Natural killer cell (primary cell): ENCODE measurements at regions of chr3 and their contacts with region 1.

Region 1: DNA sequence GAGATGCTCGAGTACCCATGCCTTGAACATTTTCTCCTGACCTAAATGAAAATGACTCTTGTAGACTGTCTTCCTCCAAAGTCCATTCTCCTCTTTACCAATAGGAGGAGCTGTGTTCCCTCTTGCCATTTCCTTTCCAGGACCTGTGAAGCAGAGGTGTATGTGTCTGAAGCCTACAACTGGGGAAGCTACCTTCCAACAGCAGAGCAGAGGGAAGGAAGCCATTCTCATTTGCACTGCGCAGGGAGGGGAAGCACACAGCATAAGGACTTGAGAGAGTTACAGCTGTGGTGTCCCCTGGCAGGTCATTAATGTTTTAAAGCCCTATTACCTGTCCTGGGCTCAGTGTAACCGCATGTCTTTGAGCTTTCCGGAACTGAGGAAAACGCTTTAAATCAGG is 38.7 kb downstream of the HSPBAP1 start:
- DNase-seq: peak in 1 of 2 donors; percentile 68
- ATAC-seq: peak; percentile 68 to 77 (median 73)
- H3K4me3 ChIP-seq: no peak overlapping the region
- H3K4me3 Mint-ChIP-seq: no peak overlapping the region
- H3K27ac ChIP-seq: no peak overlapping the region
- H3K27ac Mint-ChIP-seq: no peak overlapping the region
- H3K4me1 ChIP-seq: no peaks in the 10 kb centered on the region
- H3K4me1 Mint-ChIP-seq: no peaks in the 10 kb centered on the region
- H3K27me3 ChIP-seq: no peaks in the 10 kb centered on the region
- H3K27me3 Mint-ChIP-seq: no peaks in the 10 kb centered on the region
- CTCF ChIP-seq: peak; percentile 61

Region 2: GRCh38 chr3:122679085-122679881 is 75.6 kb before region 1 on chr3:
- intact Hi-C with region 1: no loop called
- DNase-seq: peak; percentile 75 to 94
- ATAC-seq: peak; percentile 65 to 75 (median 65)
- H3K4me3 ChIP-seq: peak overlapping the region; percentile 98
- H3K4me3 Mint-ChIP-seq: peak overlapping the region; percentile 90
- H3K27ac ChIP-seq: peak overlapping the region; percentile 96
- H3K27ac Mint-ChIP-seq: peak overlapping the region; percentile 84 to 99
- H3K4me1 ChIP-seq: peaks cover 40% of the 10 kb centered on the region
- H3K4me1 Mint-ChIP-seq: peaks cover 50 to 52% of the 10 kb centered on the region in 2 donors
- H3K27me3 ChIP-seq: no peaks in the 10 kb centered on the region
- H3K27me3 Mint-ChIP-seq: no peaks in the 10 kb centered on the region
- CTCF ChIP-seq: peak; percentile 82

Region 3: DNA sequence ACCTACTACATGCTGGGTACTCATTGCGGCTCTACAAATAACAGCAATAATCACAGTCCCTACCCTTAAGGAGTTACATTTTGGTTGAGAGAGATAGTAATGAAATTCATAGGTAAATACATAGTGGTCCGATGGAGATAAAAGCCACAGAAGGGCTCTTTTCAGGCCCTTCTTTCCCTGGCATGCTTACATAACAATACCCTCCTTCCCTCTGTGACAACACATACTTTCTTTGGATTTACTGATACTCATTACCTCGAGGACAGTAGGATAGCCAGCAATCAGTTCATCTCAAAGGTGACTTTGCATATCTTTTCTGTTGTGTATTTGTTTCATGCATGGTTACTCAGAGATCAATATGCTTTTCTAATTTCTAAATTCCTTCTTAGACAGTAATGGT is 15.8 kb before region 1 on chr3:
- intact Hi-C with region 1: no loop called
- DNase-seq: no peak
- ATAC-seq: no peak
- H3K4me3 ChIP-seq: no peak overlapping the region
- H3K4me3 Mint-ChIP-seq: no peak overlapping the region
- H3K27ac ChIP-seq: no peak overlapping the region
- H3K27ac Mint-ChIP-seq: no peak overlapping the region
- H3K4me1 ChIP-seq: no peaks in the 10 kb centered on the region
- H3K4me1 Mint-ChIP-seq: peaks cover 0 to 4% of the 10 kb centered on the region in 2 donors
- H3K27me3 ChIP-seq: no peaks in the 10 kb centered on the region
- H3K27me3 Mint-ChIP-seq: no peaks in the 10 kb centered on the region
- CTCF ChIP-seq: no peak

Region 4: GRCh38 chr3:122864498-122864897 is 109.6 kb after region 1 on chr3:
- intact Hi-C with region 1: loop called (anchors 10 kb)
- DNase-seq: no peak
- ATAC-seq: no peak
- H3K4me3 ChIP-seq: no peak overlapping the region
- H3K4me3 Mint-ChIP-seq: no peak overlapping the region
- H3K27ac ChIP-seq: no peak overlapping the region
- H3K27ac Mint-ChIP-seq: no peak overlapping the region
- H3K4me1 ChIP-seq: no peaks in the 10 kb centered on the region
- H3K4me1 Mint-ChIP-seq: no peaks in the 10 kb centered on the region
- H3K27me3 ChIP-seq: no peaks in the 10 kb centered on the region
- H3K27me3 Mint-ChIP-seq: no peaks in the 10 kb centered on the region
- CTCF ChIP-seq: no peak

Region 5: GRCh38 chr3:123028233-123028828 is 273.4 kb after region 1 on chr3:
- intact Hi-C with region 1: loop called (anchors 5 kb)
- DNase-seq: peak in 1 of 2 donors; percentile 51
- ATAC-seq: peak in 2 of 3 donors; percentile 18 to 33
- H3K4me3 ChIP-seq: peak overlapping the region; percentile 32
- H3K4me3 Mint-ChIP-seq: peak overlapping the region; percentile 41
- H3K27ac ChIP-seq: no peak overlapping the region
- H3K27ac Mint-ChIP-seq: no peak overlapping the region
- H3K4me1 ChIP-seq: peaks cover 23% of the 10 kb centered on the region
- H3K4me1 Mint-ChIP-seq: peaks cover 4 to 25% of the 10 kb centered on the region in 2 donors
- H3K27me3 ChIP-seq: peaks cover 41% of the 10 kb centered on the region
- H3K27me3 Mint-ChIP-seq: peaks cover 42 to 44% of the 10 kb centered on the region in 2 donors
- CTCF ChIP-seq: peak; percentile 19

Region 6: GRCh38 chr3:123258811-123259420 is 504.0 kb after region 1 on chr3:
- intact Hi-C with region 1: loop called (anchors 10 kb)
- DNase-seq: peak in 1 of 2 donors; percentile 51
- ATAC-seq: peak in 2 of 3 donors; percentile 38 to 51
- H3K4me3 ChIP-seq: no peak overlapping the region
- H3K4me3 Mint-ChIP-seq: no peak overlapping the region
- H3K27ac ChIP-seq: no peak overlapping the region
- H3K27ac Mint-ChIP-seq: no peak overlapping the region
- H3K4me1 ChIP-seq: no peaks in the 10 kb centered on the region
- H3K4me1 Mint-ChIP-seq: no peaks in the 10 kb centered on the region
- H3K27me3 ChIP-seq: no peaks in the 10 kb centered on the region
- H3K27me3 Mint-ChIP-seq: no peaks in the 10 kb centered on the region
- CTCF ChIP-seq: peak; percentile 30